ENCODE measurements at regions of chr1 and their contacts with region 1.

Region 1: DNA sequence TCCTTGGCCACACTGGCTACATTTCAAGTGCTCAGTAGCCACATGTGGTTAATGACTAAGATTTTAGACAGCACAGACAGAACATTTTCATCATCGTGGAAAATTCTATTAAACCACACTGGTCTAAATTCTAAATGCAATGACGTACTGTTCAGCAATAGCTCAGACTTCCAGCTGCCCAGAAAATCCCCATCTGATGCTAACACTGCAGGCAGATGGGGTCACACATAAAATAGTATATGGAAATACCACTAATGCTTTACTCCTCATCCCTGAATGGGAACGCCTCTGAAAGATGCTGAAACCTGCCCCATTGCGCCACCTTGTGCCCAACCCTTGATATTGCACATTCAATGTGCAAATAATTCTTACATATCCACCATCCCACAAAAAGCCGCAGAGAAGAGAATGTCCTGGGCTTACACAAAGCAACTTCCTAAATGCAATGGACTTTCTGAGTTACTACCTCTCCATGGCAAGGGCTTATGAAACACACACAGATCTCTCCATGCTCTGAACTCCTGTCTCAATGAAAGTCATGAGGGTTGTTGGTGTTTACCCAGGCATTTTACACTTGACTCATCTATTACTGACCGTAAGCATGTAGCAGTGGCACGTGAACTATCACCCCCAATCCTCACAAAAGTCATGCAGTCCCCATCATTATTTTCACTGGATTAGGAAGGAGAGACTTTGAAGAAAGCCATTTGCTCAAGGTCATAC is 20.3 kb upstream of the SLC5A9 start:
- DNase-seq: peak; percentile 72
- H3K4me3 Mint-ChIP-seq: no peak overlapping the region
- H3K27ac Mint-ChIP-seq: no peak overlapping the region
- H3K4me1 Mint-ChIP-seq: no peaks in the 10 kb centered on the region
- H3K27me3 Mint-ChIP-seq: peaks cover 32% of the 10 kb centered on the region
- CTCF ChIP-seq: peak; percentile 73

Region 2: GRCh38 chr1:47738560-47739182 is 463.5 kb before region 1 on chr1:
- CTCF ChIA-PET with region 1: no interaction called
- intact Hi-C with region 1: loop called (anchors 5 kb)
- DNase-seq: peak; percentile 72
- H3K4me3 Mint-ChIP-seq: no peak overlapping the region
- H3K27ac Mint-ChIP-seq: no peak overlapping the region
- H3K4me1 Mint-ChIP-seq: no peaks in the 10 kb centered on the region
- H3K27me3 Mint-ChIP-seq: peaks cover 33% of the 10 kb centered on the region
- CTCF ChIP-seq: peak; percentile 66

Region 3: GRCh38 chr1:47948126-47948525 is 254.1 kb before region 1 on chr1:
- CTCF ChIA-PET with region 1: interaction called, 3 read pairs
- intact Hi-C with region 1: loop called (anchors 2 kb)
- DNase-seq: peak; percentile 73
- H3K4me3 Mint-ChIP-seq: no peak overlapping the region
- H3K27ac Mint-ChIP-seq: no peak overlapping the region
- H3K4me1 Mint-ChIP-seq: peaks cover 53% of the 10 kb centered on the region
- H3K27me3 Mint-ChIP-seq: no peaks in the 10 kb centered on the region
- CTCF ChIP-seq: peak; percentile 62

Region 4: GRCh38 chr1:48093696-48094528 is 108.3 kb before region 1 on chr1:
- CTCF ChIA-PET with region 1: interaction called, 4 read pairs
- intact Hi-C with region 1: loop called (anchors 5 kb)
- DNase-seq: peak; percentile 94
- H3K4me3 Mint-ChIP-seq: peak overlapping the region; percentile 78
- H3K27ac Mint-ChIP-seq: peak overlapping the region; percentile 67
- H3K4me1 Mint-ChIP-seq: peaks cover 14% of the 10 kb centered on the region
- H3K27me3 Mint-ChIP-seq: peaks cover 65% of the 10 kb centered on the region
- CTCF ChIP-seq: peak; percentile 95

Region 5: GRCh38 chr1:48177257-48177656 is 24.9 kb before region 1 on chr1:
- CTCF ChIA-PET with region 1: interaction called, 3 read pairs
- intact Hi-C with region 1: loop called (anchors 2 kb)
- DNase-seq: no peak
- H3K4me3 Mint-ChIP-seq: no peak overlapping the region
- H3K27ac Mint-ChIP-seq: no peak overlapping the region
- H3K4me1 Mint-ChIP-seq: no peaks in the 10 kb centered on the region
- H3K27me3 Mint-ChIP-seq: peaks cover 17% of the 10 kb centered on the region
- CTCF ChIP-seq: no peak

Region 6: GRCh38 chr1:48236716-48237470 is 34.7 kb after region 1 on chr1:
- CTCF ChIA-PET with region 1: interaction called, 3 read pairs
- intact Hi-C with region 1: loop called (anchors 2 kb)
- DNase-seq: peak; percentile 12
- H3K4me3 Mint-ChIP-seq: no peak overlapping the region
- H3K27ac Mint-ChIP-seq: no peak overlapping the region
- H3K4me1 Mint-ChIP-seq: no peaks in the 10 kb centered on the region
- H3K27me3 Mint-ChIP-seq: peaks cover 10% of the 10 kb centered on the region
- CTCF ChIP-seq: peak; percentile 29

Measured in Calu3 (cell line).